ENCODE measurements at regions of chr13 and their contacts with region 1.

Region 1: GRCh38 chr13:77779552-77780272 is 82.2 kb downstream of the SLAIN1 start:
- DNase-seq: peak in 1 of 2 donors; percentile 68
- ATAC-seq: peak; percentile 73 to 82 (median 79)
- H3K4me3 ChIP-seq: no peak overlapping the region
- H3K4me3 Mint-ChIP-seq: no peak overlapping the region
- H3K27ac ChIP-seq: no peak overlapping the region
- H3K27ac Mint-ChIP-seq: no peak overlapping the region
- H3K4me1 ChIP-seq: no peaks in the 10 kb centered on the region
- H3K4me1 Mint-ChIP-seq: peaks cover 6 to 7% of the 10 kb centered on the region in 2 donors
- H3K27me3 ChIP-seq: no peaks in the 10 kb centered on the region
- H3K27me3 Mint-ChIP-seq: peaks cover 0 to 2% of the 10 kb centered on the region in 2 donors
- CTCF ChIP-seq: peak; percentile 83

Region 2: DNA sequence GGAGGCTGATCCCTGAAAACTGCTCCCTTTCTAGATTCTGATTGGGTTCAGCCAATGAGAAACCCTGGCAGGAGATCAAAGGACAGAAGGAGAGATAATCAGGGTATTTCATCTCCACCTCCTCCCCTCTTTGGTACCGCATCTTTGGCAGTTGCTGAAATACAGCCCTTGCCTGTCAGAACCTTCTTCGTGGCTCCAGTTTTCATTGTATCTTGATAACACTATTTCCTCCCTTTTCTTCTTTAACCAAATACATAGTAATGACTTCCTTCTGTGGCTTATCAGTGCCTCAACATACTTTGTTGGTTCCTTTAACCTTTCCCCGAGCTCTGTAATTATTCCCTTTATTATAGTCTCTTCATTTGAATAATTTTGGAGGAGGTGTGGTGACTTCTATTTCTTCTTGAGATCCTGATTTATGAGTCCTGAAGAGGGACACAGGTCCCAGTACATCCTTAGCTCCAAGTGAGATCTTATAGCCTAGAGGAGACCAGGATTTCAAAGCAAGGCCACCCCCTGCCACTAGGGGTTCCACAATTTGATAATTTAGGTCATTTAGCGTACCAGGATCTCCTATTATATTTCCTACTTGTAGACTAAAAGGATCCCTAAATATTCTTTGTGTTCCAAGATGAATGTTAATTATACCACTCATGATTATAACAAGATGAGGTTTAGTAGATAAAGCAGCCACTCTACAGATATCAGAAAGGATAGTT is 40.9 kb after region 1 on chr13:
- intact Hi-C with region 1: no loop called
- DNase-seq: no peak
- ATAC-seq: no peak
- H3K4me3 ChIP-seq: no peak overlapping the region
- H3K4me3 Mint-ChIP-seq: no peak overlapping the region
- H3K27ac ChIP-seq: no peak overlapping the region
- H3K27ac Mint-ChIP-seq: no peak overlapping the region
- H3K4me1 ChIP-seq: no peaks in the 10 kb centered on the region
- H3K4me1 Mint-ChIP-seq: no peaks in the 10 kb centered on the region
- H3K27me3 ChIP-seq: no peaks in the 10 kb centered on the region
- H3K27me3 Mint-ChIP-seq: peaks cover 6 to 11% of the 10 kb centered on the region in 2 donors
- CTCF ChIP-seq: no peak

Region 3: GRCh38 chr13:78121459-78122348 is 342.0 kb after region 1 on chr13:
- intact Hi-C with region 1: loop called (anchors 1 kb)
- DNase-seq: peak in 1 of 2 donors; percentile 76
- ATAC-seq: peak in 1 of 3 donors; percentile 68
- H3K4me3 ChIP-seq: no peak overlapping the region
- H3K4me3 Mint-ChIP-seq: no peak overlapping the region
- H3K27ac ChIP-seq: no peak overlapping the region
- H3K27ac Mint-ChIP-seq: no peak overlapping the region
- H3K4me1 ChIP-seq: no peaks in the 10 kb centered on the region
- H3K4me1 Mint-ChIP-seq: peaks cover 0 to 8% of the 10 kb centered on the region in 2 donors
- H3K27me3 ChIP-seq: no peaks in the 10 kb centered on the region
- H3K27me3 Mint-ChIP-seq: peaks cover 9 to 20% of the 10 kb centered on the region in 2 donors
- CTCF ChIP-seq: peak; percentile 99

Region 4: GRCh38 chr13:78978381-78978998 is 1198.8 kb after region 1 on chr13:
- intact Hi-C with region 1: loop called (anchors 2 kb)
- DNase-seq: peak in 1 of 2 donors; percentile 68
- ATAC-seq: peak; percentile 64 to 74 (median 68)
- H3K4me3 ChIP-seq: no peak overlapping the region
- H3K4me3 Mint-ChIP-seq: no peak overlapping the region
- H3K27ac ChIP-seq: no peak overlapping the region
- H3K27ac Mint-ChIP-seq: no peak overlapping the region
- H3K4me1 ChIP-seq: no peaks in the 10 kb centered on the region
- H3K4me1 Mint-ChIP-seq: no peaks in the 10 kb centered on the region
- H3K27me3 ChIP-seq: no peaks in the 10 kb centered on the region
- H3K27me3 Mint-ChIP-seq: peaks cover 6 to 11% of the 10 kb centered on the region in 2 donors
- CTCF ChIP-seq: peak; percentile 69

Measured in natural killer cell (primary cell).